ENCODE measurements at regions of chrX and their contacts with region 1.

Region 1: GRCh38 chrX:78997870-78998558 is 52.8 kb downstream of the P2RY10 start:
- DNase-seq: no peak
- ATAC-seq: no peak
- H3K4me3 Mint-ChIP-seq: no peak overlapping the region
- H3K27ac Mint-ChIP-seq: no peak overlapping the region
- H3K4me1 Mint-ChIP-seq: peaks cover 13% of the 10 kb centered on the region
- H3K27me3 Mint-ChIP-seq: no peaks in the 10 kb centered on the region
- CTCF ChIP-seq: no peak

Region 2: DNA sequence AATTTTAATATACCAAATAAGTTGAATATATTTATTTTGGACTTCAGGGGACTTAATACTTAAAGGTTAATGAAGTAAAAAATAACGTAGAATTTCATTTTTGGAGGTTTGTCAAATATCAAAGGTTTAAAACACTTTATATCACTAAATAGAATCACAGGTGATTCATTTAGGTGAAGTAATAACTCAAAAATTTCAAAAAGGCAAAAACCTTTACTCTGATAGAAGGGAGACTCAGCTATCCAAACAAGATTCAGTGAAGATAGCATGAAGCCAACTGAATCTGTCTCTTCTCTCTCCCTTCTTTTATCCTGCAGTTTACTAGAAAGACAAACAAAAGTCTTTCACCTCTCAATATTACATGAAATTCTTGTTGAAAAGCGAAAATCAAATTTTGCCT is 560.4 kb before region 1 on chrX:
- CTCF ChIA-PET with region 1: no interaction called
- POLR2A ChIA-PET with region 1: no interaction called
- intact Hi-C with region 1: no loop called
- DNase-seq: no peak
- ATAC-seq: no peak
- H3K4me3 Mint-ChIP-seq: no peak overlapping the region
- H3K27ac Mint-ChIP-seq: no peak overlapping the region
- H3K4me1 Mint-ChIP-seq: no peaks in the 10 kb centered on the region
- H3K27me3 Mint-ChIP-seq: no peaks in the 10 kb centered on the region
- CTCF ChIP-seq: no peak

Region 3: DNA sequence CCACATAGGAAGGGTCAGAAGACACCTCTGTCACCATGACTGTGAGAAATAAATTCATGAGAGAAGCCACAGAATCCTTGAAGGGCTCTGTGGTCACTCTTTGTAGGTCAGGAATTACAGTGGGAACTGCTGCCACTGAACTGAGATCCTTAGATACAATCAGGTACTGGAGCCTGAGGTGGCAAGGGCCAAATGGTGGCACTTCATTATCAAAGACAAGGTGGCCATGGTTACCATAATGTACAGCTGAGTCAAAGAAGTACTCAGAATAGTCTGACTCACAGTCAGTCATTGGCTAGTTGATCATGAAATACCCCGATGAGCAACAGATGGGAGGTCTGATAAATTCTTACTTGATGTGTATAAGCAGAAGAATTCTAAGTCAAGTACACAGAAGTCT is 470.8 kb before region 1 on chrX:
- CTCF ChIA-PET with region 1: no interaction called
- POLR2A ChIA-PET with region 1: no interaction called
- intact Hi-C with region 1: no loop called
- DNase-seq: no peak
- ATAC-seq: no peak
- H3K4me3 Mint-ChIP-seq: no peak overlapping the region
- H3K27ac Mint-ChIP-seq: no peak overlapping the region
- H3K4me1 Mint-ChIP-seq: no peaks in the 10 kb centered on the region
- H3K27me3 Mint-ChIP-seq: no peaks in the 10 kb centered on the region
- CTCF ChIP-seq: no peak

Region 4: DNA sequence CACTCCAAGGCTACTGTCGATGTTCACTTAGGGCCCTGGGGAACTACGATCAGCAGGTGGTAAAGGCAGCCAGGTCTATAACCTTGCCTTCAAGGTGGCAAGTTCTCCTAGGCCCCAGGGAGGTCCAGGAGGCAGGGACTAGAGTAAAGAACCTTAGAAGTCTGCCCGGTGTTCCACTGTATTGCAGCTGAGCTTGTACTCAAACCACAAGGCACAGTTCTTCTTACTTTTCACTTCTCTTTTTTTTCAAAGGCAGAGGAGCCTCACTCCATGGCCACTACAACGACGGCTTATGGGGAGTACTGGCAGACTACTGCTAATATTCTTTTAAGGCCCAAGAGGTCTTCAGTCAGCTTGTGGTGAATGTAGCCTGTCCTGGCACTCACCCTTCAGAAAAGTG is 67.7 kb after region 1 on chrX:
- CTCF ChIA-PET with region 1: no interaction called
- POLR2A ChIA-PET with region 1: no interaction called
- intact Hi-C with region 1: loop called (anchors 10 kb)
- DNase-seq: peak; percentile 14
- ATAC-seq: peak; percentile 95
- H3K4me3 Mint-ChIP-seq: no peak overlapping the region
- H3K27ac Mint-ChIP-seq: peak overlapping the region; percentile 53
- H3K4me1 Mint-ChIP-seq: peaks cover 21% of the 10 kb centered on the region
- H3K27me3 Mint-ChIP-seq: no peaks in the 10 kb centered on the region
- CTCF ChIP-seq: no peak

Measured in activated B cell treated with CpG ODN at 0.5 μM for 24 hours (primary cell).